ENCODE measurements at regions of chr11 and their contacts with region 1.

Region 1: DNA sequence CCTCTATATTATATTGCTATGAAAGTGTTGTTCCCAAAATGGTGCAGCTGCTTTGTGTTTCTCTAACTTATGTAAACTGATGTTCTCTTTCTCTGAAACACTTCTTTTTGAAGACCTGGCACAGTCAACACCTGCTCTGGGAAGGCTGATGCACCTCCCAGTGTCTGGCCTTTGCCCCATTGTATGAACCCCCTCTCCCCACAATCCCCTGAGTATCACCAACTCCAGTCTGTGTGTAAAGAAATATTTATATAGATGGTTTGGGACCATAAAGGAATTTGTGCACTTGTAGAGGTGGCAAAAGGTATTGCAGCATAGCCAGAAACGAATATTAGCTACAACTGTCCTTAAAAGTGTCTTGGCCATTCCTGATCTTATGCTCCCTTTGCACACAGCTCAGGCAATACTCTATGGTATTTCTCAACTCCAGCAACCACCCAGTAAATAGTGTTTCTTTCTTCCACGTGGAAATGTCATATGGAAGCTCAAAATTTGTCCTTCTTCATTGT is 365.2 kb upstream of the DDI1 start:
- DNase-seq: no peak
- H3K4me3 ChIP-seq: no peak overlapping the region
- H3K27ac ChIP-seq: no peak overlapping the region
- H3K4me1 ChIP-seq: peaks cover 2 to 9% of the 10 kb centered on the region in 2 experiments; a peak in 2 of 4 replicates
- H3K27me3 ChIP-seq: no peaks in the 10 kb centered on the region
- CTCF ChIP-seq: peak; percentile 25; the same call in 1 of the 2 replicates
- EP300 ChIP-seq: no peak
- RAD21 ChIP-seq: no peak

Region 2: DNA sequence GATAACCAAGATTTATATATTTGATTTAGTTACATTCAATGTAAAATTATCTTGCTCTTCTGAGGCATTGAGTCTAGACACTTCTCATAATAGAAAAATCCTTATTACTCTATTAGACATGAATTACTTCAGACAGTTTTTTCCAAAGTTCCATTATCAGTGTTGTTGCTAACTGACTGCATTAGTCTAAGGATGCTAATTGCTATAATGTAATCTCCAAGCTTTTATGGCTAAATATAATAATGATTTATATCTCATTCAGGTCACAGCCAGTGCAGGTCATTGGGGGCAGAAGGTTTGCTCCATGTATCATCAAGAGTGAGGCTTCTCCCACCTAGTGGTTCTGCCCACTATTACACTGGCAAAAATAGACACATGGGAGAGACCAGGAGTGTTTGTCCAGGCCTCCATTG is 12.0 kb before region 1 on chr11:
- CTCF ChIA-PET with region 1: interaction called, 15 read pairs
- POLR2A ChIA-PET with region 1: no interaction called
- DNase-seq: peak; percentile 48
- H3K4me3 ChIP-seq: no peak overlapping the region
- H3K27ac ChIP-seq: peak overlapping the region; percentile 14 to 83
- H3K4me1 ChIP-seq: peaks cover 4 to 8% of the 10 kb centered on the region in 2 experiments; a peak in 3 of 4 replicates
- H3K27me3 ChIP-seq: no peaks in the 10 kb centered on the region
- CTCF ChIP-seq: peak; percentile 66
- EP300 ChIP-seq: peak; percentile 71 to 87
- RAD21 ChIP-seq: peak; percentile 80

Measured in SK-N-SH (cell line).